ENCODE measurements at regions of chr11 and their contacts with region 1.

Region 1: DNA sequence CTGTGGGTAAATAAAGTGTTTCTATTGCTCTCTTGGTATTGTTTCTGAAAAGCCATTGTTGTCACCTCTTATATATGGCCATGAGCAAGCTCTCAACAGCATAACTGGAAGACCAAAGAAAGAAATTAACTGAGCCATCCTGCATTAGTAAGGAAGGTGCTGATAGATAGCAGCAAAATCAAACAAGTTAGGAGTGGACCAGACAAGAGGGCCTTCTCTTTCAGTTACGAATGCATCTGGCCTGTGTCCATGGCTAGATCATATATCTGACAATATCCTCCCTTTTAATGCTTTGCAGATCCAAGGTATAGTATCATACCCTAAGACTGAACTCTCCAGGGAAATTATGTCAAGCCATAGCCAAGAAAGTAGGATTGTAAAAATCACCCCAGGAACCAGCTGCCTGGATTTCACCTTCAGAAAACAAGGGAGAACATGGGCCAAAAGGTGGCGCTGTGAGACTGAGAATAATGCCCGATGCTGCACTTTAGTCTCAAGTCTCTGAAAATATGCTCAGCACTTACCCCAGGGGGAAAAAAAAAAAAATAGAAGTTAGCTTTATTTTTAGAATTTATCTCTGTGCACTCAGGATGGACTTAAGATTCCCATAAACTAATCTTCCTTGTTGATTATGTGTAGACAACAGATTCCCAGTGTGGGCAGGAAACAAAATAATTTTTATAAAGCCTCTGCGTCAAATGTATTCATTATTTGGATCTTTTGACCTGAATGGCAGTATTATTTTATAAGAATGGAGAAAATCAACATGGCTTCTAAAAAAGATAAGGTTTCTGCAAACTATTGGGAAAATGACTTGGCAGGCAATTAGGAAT is 415.1 kb downstream of the ETS1 start:
- DNase-seq: peak; percentile 38
- ATAC-seq: peak; percentile 93
- H3K4me3 ChIP-seq: no peak overlapping the region
- H3K27ac ChIP-seq: no peak overlapping the region
- H3K4me1 ChIP-seq: no peaks in the 10 kb centered on the region
- H3K27me3 ChIP-seq: no peaks in the 10 kb centered on the region; a peak in 2 of 4 replicates
- CTCF ChIP-seq: peak; percentile 68 to 91 (median 72)
- EP300 ChIP-seq: no peak
- POLR2A ChIP-seq: no peak
- RAD21 ChIP-seq: peak; percentile 97

Region 2: GRCh38 chr11:128765571-128766549 is 593.6 kb after region 1 on chr11:
- CTCF ChIA-PET with region 1: no interaction called
- POLR2A ChIA-PET with region 1: no interaction called
- RAD21 ChIA-PET with region 1: no interaction called
- SMC1A ChIA-PET with region 1: interaction called, 3 read pairs
- in situ Hi-C with region 1: loop called (anchors 5 kb)
- intact Hi-C with region 1: no loop called
- DNase-seq: no peak
- ATAC-seq: no peak
- H3K4me3 ChIP-seq: no peak overlapping the region
- H3K27ac ChIP-seq: no peak overlapping the region
- H3K4me1 ChIP-seq: no peaks in the 10 kb centered on the region
- H3K27me3 ChIP-seq: no peaks in the 10 kb centered on the region
- CTCF ChIP-seq: no peak
- EP300 ChIP-seq: no peak
- POLR2A ChIP-seq: no peak
- RAD21 ChIP-seq: no peak

Region 3: GRCh38 chr11:128776424-128777284 is 604.4 kb after region 1 on chr11:
- CTCF ChIA-PET with region 1: interaction called, 6 read pairs
- POLR2A ChIA-PET with region 1: no interaction called
- RAD21 ChIA-PET with region 1: interaction called, 4 read pairs
- SMC1A ChIA-PET with region 1: interaction called, 3 read pairs
- in situ Hi-C with region 1: no loop called
- intact Hi-C with region 1: loop called (anchors 5 kb)
- DNase-seq: no peak
- ATAC-seq: peak; percentile 88
- H3K4me3 ChIP-seq: no peak overlapping the region
- H3K27ac ChIP-seq: no peak overlapping the region
- H3K4me1 ChIP-seq: no peaks in the 10 kb centered on the region
- H3K27me3 ChIP-seq: no peaks in the 10 kb centered on the region
- CTCF ChIP-seq: peak; percentile 30 to 53 (median 34); a peak in 4 of 6 replicates
- EP300 ChIP-seq: no peak
- POLR2A ChIP-seq: no peak
- RAD21 ChIP-seq: peak; percentile 28; the same call in 1 of the 2 replicates

Region 4: DNA sequence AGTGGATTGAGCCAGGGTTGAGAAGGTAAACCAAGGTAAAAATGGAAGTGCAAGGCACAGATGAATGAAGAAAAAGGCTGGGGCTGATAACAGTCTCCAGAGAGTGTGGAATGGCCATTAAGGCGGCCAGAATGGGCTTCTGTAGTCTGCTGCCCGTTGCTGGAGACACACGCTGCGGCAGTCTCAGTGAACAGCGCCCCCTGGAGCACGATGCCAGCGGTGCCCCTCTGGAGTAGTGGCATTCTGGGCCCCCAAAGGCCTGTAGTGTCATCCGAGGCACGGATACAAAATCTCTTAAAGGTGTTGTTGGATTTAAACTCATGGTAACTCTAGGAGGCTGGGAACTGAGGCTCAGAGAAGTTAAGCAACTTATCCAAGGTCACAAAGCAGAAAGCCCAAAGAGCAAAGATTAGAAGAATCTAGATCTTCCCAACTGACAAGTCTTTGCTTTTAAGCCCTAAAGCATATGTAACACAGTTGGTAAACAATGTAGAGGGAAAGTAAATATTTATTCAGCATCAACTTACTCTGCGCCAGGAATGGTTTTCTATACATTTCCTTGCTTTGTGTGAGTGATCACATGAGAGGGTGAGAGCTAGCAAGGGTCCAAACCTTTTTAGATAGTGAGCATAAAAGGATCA is 676.7 kb after region 1 on chr11:
- CTCF ChIA-PET with region 1: interaction called, 13 read pairs
- POLR2A ChIA-PET with region 1: no interaction called
- RAD21 ChIA-PET with region 1: interaction called, 3 read pairs
- SMC1A ChIA-PET with region 1: no interaction called
- in situ Hi-C with region 1: no loop called
- intact Hi-C with region 1: loop called (anchors 5 kb)
- DNase-seq: no peak
- ATAC-seq: peak; percentile 100
- H3K4me3 ChIP-seq: no peak overlapping the region
- H3K27ac ChIP-seq: no peak overlapping the region
- H3K4me1 ChIP-seq: peaks cover 4% of the 10 kb centered on the region; the same call in 1 of the 2 replicates
- H3K27me3 ChIP-seq: no peaks in the 10 kb centered on the region
- CTCF ChIP-seq: peak; percentile 81 to 91 (median 88)
- EP300 ChIP-seq: no peak
- POLR2A ChIP-seq: no peak
- RAD21 ChIP-seq: peak; percentile 68